Activated CD4-positive, alpha-beta memory T cell treated with anti-CD3 and anti-CD28 coated beads for 36 hours (primary cell): ENCODE measurements at regions of chr11 and their contacts with region 1.

Region 1: GRCh38 chr11:47373876-47374720 is 4.2 kb downstream of the SPI1 start:
- DNase-seq: peak; percentile 88
- H3K4me3 Mint-ChIP-seq: no peak overlapping the region
- H3K27ac Mint-ChIP-seq: peak overlapping the region; percentile 23
- H3K4me1 Mint-ChIP-seq: peaks cover 18% of the 10 kb centered on the region
- H3K27me3 Mint-ChIP-seq: no peaks in the 10 kb centered on the region

Region 2: DNA sequence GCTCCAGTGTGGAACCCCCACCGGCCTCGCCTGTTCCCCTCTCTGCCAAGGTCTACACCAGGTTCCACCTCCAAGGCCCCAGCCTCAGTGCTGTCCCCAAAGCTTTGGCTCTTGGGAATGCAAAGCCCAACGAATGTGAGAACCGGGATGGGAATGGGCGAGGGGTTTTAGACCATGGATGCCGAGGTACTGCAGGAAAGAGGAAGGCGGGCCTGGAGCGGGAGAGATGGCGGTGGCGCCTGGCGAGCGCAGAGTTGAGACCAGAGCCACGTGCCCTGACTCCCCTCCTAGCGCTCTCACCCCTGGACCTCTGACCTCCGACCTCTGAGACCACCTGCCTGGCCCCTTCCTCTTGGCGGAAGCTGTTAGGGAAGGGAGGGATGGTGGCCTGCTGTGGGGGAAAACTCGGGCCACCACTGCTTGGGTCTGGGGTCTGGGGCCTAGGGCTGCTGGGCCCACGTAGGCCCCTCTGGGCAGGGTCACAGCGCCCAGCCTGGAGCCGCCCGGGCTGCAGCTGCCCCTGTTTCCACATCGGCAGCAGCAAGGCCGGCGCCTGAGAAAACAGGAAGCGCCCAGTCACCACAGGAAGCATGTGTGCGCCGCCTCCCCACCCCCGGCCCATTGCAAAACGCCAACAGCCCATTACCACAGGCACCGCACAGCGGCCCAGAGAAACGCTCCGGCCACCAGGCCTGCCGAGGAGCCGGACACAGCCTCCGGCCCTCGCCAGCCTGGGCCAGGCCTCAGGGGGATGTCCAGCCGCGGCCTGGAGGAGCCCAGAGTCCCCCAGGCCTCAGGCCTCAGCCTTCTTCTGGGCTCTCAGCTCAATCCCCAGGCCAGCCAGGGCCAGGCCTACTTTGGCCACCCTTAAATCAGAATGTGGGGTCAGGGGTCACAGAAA is 20.5 kb after region 1 on chr11:
- CTCF ChIA-PET with region 1: interaction called, 43 read pairs
- POLR2A ChIA-PET with region 1: no interaction called
- intact Hi-C with region 1: no loop called
- DNase-seq: peak; percentile 76
- H3K4me3 Mint-ChIP-seq: peak overlapping the region; percentile 52
- H3K27ac Mint-ChIP-seq: peak overlapping the region; percentile 82
- H3K4me1 Mint-ChIP-seq: peaks cover 23% of the 10 kb centered on the region
- H3K27me3 Mint-ChIP-seq: no peaks in the 10 kb centered on the region

Region 3: GRCh38 chr11:47399860-47400767 is 26.0 kb after region 1 on chr11:
- CTCF ChIA-PET with region 1: interaction called, 43 read pairs
- POLR2A ChIA-PET with region 1: no interaction called
- intact Hi-C with region 1: no loop called
- DNase-seq: peak; percentile 51
- H3K4me3 Mint-ChIP-seq: peak overlapping the region; percentile 73
- H3K27ac Mint-ChIP-seq: peak overlapping the region; percentile 77
- H3K4me1 Mint-ChIP-seq: peaks cover 13% of the 10 kb centered on the region
- H3K27me3 Mint-ChIP-seq: no peaks in the 10 kb centered on the region

Region 4: DNA sequence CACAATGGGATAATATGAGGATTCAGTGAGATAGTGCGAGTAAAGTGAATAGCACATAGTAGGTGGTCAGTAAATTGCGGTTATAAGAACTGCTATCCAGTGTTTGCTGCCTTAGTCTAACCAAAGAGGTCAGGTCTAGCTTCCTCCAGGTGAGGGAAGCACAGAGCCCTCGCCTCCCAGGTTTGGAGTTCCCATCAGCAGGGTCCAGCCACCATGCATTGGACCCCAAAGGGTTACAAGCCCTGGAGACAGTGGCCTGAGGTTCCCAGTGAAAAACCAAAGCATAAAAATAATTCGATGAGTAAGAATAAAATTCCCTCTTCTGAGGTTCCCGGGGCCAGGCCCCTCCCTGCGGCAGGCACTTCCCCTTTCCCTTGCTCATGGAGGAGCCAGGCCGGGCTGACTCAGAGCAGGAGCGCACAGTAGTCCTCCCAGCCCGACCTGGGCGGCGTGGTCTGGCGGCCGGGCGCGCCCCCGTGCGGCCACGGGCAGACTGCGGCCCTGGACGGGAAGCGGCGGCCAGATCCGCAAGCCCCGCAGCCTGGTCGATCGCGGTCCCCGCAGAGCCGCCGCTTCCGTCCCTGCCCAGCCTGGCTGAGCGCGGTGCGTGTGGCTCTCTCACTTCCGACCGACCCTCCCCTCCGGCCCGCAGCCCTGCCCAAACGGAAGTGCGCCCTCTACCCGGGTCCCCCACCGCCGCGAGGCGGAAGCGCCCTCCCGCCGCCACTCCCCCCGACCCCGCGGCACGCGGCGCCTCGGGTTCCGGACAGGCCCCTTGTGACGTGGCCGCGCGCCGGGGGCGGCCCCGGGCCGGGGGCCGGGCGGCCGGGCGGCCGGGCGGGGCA is 33.9 kb after region 1 on chr11 and contains the start of gene SLC39A13:
- CTCF ChIA-PET with region 1: interaction called, 121 read pairs
- POLR2A ChIA-PET with region 1: interaction called, 4 read pairs
- intact Hi-C with region 1: loop called (anchors 1 kb)
- DNase-seq: peak; percentile 95
- H3K4me3 Mint-ChIP-seq: peak within 1 kb of the TSS; percentile 86
- H3K27ac Mint-ChIP-seq: peak within 1 kb of the TSS; percentile 95
- H3K4me1 Mint-ChIP-seq: peaks cover 17% of the 10 kb centered on the region
- H3K27me3 Mint-ChIP-seq: no peaks in the 10 kb centered on the region
- total RNA-seq, gene SLC39A13: 17.7 to 18.0 TPM

Region 5: DNA sequence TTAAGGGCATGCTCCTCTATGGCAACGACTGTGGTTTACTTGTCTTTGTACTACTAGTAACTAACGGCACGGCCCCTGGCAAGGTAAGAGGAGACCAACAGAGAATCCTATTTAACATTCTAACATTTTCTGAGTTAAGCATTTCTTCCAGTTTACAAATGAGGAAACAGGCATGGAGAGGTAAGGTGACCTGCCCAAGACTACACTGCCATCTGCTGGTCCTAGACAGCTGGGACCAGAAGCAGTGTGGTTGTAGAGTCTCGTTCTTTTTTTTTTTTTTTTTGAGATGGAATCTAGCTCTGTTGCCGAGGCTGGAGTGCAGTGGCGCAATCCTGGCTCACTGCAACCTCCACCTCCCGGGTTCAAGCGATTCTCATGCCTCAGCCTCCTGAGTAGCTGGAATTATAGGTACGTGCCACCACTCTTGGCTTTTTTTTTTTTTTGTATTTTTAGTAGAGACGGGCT is 80.1 kb after region 1 on chr11:
- CTCF ChIA-PET with region 1: interaction called, 10 read pairs
- POLR2A ChIA-PET with region 1: no interaction called
- intact Hi-C with region 1: loop called (anchors 2 kb)
- DNase-seq: peak; percentile 77
- H3K4me3 Mint-ChIP-seq: no peak overlapping the region
- H3K27ac Mint-ChIP-seq: no peak overlapping the region
- H3K4me1 Mint-ChIP-seq: no peaks in the 10 kb centered on the region
- H3K27me3 Mint-ChIP-seq: no peaks in the 10 kb centered on the region

Region 6: GRCh38 chr11:47847892-47848635 is 474.0 kb after region 1 on chr11 and contains the start of gene NUP160:
- CTCF ChIA-PET with region 1: interaction called, 5 read pairs
- POLR2A ChIA-PET with region 1: no interaction called
- intact Hi-C with region 1: loop called (anchors 2 kb)
- DNase-seq: peak; percentile 92
- H3K4me3 Mint-ChIP-seq: peak within 1 kb of the TSS; percentile 98
- H3K27ac Mint-ChIP-seq: peak within 1 kb of the TSS; percentile 97
- H3K4me1 Mint-ChIP-seq: peaks cover 45% of the 10 kb centered on the region
- H3K27me3 Mint-ChIP-seq: no peaks in the 10 kb centered on the region
- total RNA-seq, gene NUP160: 68.0 to 69.5 TPM